ENCODE measurements at regions of chr20 and their contacts with region 1.

Region 1: DNA sequence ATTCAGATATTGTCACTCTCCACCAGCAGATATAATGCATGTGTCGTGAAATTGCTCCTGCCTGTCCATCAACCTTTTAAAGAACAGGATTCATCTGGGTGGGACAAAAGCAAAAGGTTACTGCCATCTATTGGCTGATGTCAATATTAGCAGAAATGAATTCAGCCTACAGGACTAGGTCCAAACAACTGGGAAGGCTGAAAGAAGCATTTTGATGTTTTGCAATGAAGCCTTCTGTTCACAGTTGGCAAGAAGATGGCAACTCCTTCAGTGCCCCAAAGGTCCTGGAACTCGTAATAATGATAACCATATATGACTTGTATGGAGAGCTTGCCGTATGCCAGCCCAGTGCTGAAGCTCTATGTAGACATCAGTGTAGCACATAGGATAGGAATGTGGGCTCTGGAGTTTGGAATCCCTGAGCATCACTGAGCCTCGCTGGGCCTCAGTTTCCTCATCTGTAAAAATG is 7.5 kb downstream of the BCAS1 start:
- DNase-seq: peak; percentile 79
- ATAC-seq: peak; percentile 49
- H3K4me3 ChIP-seq: no peak overlapping the region
- H3K27ac ChIP-seq: no peak overlapping the region
- H3K4me1 ChIP-seq: peaks cover 15% of the 10 kb centered on the region
- H3K27me3 ChIP-seq: no peaks in the 10 kb centered on the region
- CTCF ChIP-seq: peak; percentile 95

Region 2: GRCh38 chr20:53255102-53255710 is 807.6 kb before region 1 on chr20:
- CTCF ChIA-PET with region 1: no interaction called
- POLR2A ChIA-PET with region 1: no interaction called
- intact Hi-C with region 1: no loop called
- DNase-seq: no peak
- ATAC-seq: no peak
- H3K4me3 ChIP-seq: no peak overlapping the region
- H3K27ac ChIP-seq: no peak overlapping the region
- H3K4me1 ChIP-seq: no peaks in the 10 kb centered on the region
- H3K27me3 ChIP-seq: peaks cover 96% of the 10 kb centered on the region
- CTCF ChIP-seq: no peak

Region 3: GRCh38 chr20:53578492-53579222 is 484.2 kb before region 1 on chr20:
- CTCF ChIA-PET with region 1: no interaction called
- POLR2A ChIA-PET with region 1: no interaction called
- intact Hi-C with region 1: loop called (anchors 2 kb)
- DNase-seq: peak; percentile 100
- ATAC-seq: peak; percentile 12
- H3K4me3 ChIP-seq: peak overlapping the region; percentile 75
- H3K27ac ChIP-seq: peak overlapping the region; percentile 88
- H3K4me1 ChIP-seq: peaks cover 59% of the 10 kb centered on the region
- H3K27me3 ChIP-seq: no peaks in the 10 kb centered on the region
- CTCF ChIP-seq: peak; percentile 99

Region 4: DNA sequence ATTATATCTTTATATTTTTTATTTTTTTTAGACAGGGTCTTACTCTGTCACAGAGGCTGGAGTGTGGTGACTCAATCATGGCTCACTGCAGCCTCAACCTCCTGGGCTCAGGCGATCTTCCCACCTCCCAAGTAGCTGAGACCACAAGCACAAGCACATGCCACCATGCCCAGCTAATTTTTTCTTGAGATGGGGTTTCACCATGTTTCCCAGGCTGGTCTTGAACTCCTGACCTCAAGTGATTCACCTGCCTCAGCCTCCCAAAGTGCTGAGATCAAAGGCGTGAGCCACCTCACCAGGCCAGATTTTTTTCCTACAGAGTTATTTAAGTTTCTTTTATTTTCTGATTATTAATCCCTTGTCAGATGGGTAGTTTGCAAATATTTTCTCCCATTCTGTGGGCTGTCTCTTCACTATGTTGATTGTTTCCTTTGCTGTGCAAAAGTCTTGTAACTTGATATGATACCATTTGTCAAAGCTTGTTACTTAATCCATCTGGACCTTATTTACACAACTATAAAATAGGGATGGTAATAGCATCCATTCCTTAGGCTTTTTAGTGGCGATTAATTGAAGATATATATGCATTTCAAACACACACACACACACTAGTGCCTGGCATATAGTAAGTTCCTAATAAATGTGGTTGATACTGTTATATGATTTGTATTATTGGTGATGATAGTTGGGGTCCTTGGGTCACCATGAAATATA is 179.6 kb before region 1 on chr20:
- CTCF ChIA-PET with region 1: no interaction called
- POLR2A ChIA-PET with region 1: no interaction called
- intact Hi-C with region 1: no loop called
- DNase-seq: peak; percentile 89
- ATAC-seq: peak; percentile 68
- H3K4me3 ChIP-seq: no peak overlapping the region
- H3K27ac ChIP-seq: peak overlapping the region; percentile 73
- H3K4me1 ChIP-seq: peaks cover 35% of the 10 kb centered on the region
- H3K27me3 ChIP-seq: no peaks in the 10 kb centered on the region
- CTCF ChIP-seq: no peak

Region 5: DNA sequence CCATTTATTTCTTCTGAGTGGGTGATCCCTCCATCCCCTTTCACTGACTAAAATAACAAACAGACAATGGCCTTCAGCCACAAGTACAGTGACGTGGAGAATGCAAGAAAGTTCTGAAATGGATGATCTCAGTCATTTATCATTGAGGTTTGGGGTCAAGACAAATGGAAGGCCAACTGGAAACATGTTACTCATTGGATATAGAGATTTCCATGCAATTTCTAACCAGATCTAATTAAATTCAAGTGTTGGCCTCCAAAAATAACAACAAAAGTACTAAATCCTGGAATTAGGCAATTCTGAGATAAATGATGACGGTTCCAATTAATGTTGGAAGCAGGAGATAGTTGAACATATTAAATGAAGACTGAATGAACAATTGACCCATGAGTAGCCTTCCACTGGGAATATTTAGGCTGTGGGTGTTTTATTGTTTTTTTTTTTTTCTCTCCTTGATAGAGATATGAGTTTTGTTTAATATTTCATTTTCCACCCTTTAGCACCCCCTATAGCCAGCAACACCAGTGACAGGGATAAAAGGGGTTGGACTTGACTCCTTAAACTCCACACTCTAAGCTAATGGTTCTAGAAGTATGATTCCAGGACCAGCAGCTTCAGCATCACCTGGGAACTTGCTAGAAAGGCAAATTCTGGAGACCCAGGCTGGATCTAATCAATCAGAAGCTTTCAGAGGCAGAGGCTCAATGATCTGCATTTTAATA is 105.2 kb before region 1 on chr20:
- CTCF ChIA-PET with region 1: no interaction called
- POLR2A ChIA-PET with region 1: no interaction called
- intact Hi-C with region 1: loop called (anchors 5 kb)
- DNase-seq: peak; percentile 55
- ATAC-seq: peak; percentile 40; the same call in 1 of the 2 replicates
- H3K4me3 ChIP-seq: no peak overlapping the region
- H3K27ac ChIP-seq: no peak overlapping the region
- H3K4me1 ChIP-seq: no peaks in the 10 kb centered on the region
- H3K27me3 ChIP-seq: peaks cover 8% of the 10 kb centered on the region; the same call in 1 of the 2 replicates
- CTCF ChIP-seq: peak; percentile 77

Region 6: DNA sequence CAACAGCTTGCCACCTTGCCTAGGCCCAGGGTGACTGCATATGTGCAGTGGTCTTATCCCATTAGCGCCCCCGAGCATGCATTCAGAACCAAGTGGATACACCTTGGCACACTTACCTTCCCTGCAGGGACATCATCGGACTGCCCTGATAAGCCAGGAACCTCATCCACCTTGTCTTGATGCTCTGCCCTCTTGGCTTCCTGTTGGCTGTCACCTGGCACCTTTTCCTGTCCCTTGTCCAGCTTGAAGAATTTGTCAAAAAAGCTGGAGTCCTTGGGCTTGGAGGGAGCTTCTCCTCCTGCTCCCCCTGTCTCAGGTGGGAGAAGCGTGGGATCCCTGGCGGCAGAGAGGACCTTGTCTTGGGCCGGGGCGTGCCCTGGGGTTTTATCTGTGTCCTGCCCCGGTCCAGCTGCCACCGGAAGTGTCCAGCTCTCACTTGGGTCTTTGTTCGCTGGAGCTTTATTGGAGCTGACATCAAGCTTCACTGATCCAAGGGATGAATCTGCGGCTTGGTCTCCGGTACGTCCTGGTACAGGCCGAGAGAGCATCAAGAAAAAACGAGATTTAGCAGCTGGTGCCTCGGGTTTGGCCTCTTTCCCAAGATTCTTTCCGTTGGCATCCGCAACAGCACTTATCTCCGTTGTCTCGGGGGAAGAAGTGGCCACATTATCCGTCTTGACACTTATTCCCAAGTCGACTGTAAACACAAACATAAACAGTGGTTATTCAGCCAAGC is 34.4 kb before region 1 on chr20:
- CTCF ChIA-PET with region 1: no interaction called
- POLR2A ChIA-PET with region 1: no interaction called
- intact Hi-C with region 1: no loop called
- DNase-seq: no peak
- ATAC-seq: no peak
- H3K4me3 ChIP-seq: no peak overlapping the region
- H3K27ac ChIP-seq: no peak overlapping the region
- H3K4me1 ChIP-seq: no peaks in the 10 kb centered on the region
- H3K27me3 ChIP-seq: peaks cover 100% of the 10 kb centered on the region
- CTCF ChIP-seq: no peak

Region 7: GRCh38 chr20:54097236-54097529 is 34.3 kb after region 1 on chr20:
- CTCF ChIA-PET with region 1: interaction called, 3 read pairs
- POLR2A ChIA-PET with region 1: no interaction called
- intact Hi-C with region 1: loop called (anchors 2 kb)
- DNase-seq: no peak
- ATAC-seq: peak; percentile 23
- H3K4me3 ChIP-seq: no peak overlapping the region
- H3K27ac ChIP-seq: no peak overlapping the region
- H3K4me1 ChIP-seq: no peaks in the 10 kb centered on the region
- H3K27me3 ChIP-seq: no peaks in the 10 kb centered on the region
- CTCF ChIP-seq: no peak